ENCODE measurements at regions of chr1 and their contacts with region 1.

Region 1: GRCh38 chr1:153727463-153728304 is at the start of gene INTS3:
- DNase-seq: peak; percentile 99
- H3K4me3 ChIP-seq: peak within 1 kb of the TSS; percentile 62
- H3K27me3 ChIP-seq: no peaks in the 10 kb centered on the region
- CTCF ChIP-seq: peak; percentile 10; the same call in 1 of the 2 replicates
- polyA plus RNA-seq, gene INTS3: 38.8 and 52.8 TPM in 2 replicates

Region 2: DNA sequence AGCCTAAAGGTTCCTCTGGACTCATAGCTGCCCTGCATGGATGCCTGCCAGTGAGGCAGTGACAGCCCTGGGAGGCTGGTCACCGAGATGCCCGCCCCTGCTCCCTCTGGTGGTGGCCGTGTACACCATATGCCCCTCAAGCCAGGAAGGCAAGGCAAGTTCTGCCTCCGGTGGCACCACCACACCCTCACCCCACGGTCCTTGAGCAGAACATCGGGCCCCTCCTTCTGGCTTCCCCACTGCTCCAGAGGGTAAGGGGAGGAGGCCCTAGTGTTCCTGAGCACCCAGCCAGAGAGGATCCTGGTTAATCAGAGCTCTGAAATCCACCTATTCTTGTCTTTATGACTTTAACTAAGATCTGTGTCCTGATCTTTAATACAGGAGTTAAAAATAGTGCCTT is 110.0 kb before region 1 on chr1:
- CTCF ChIA-PET with region 1: no interaction called
- POLR2A ChIA-PET with region 1: no interaction called
- DNase-seq: no peak
- H3K4me3 ChIP-seq: no peak overlapping the region
- H3K27me3 ChIP-seq: no peaks in the 10 kb centered on the region
- CTCF ChIP-seq: peak; percentile 89

Region 3: GRCh38 chr1:153633716-153634665 is 93.7 kb before region 1 on chr1 and contains the start of gene CHTOP:
- CTCF ChIA-PET with region 1: interaction called, 3 read pairs
- POLR2A ChIA-PET with region 1: interaction called, 13 read pairs
- DNase-seq: peak; percentile 88
- H3K4me3 ChIP-seq: peak within 1 kb of the TSS; percentile 80
- H3K27me3 ChIP-seq: no peaks in the 10 kb centered on the region
- CTCF ChIP-seq: no peak; the same call in 1 of the 2 replicates
- polyA plus RNA-seq, gene CHTOP: 36.8 and 38.4 TPM in 2 replicates

Region 4: DNA sequence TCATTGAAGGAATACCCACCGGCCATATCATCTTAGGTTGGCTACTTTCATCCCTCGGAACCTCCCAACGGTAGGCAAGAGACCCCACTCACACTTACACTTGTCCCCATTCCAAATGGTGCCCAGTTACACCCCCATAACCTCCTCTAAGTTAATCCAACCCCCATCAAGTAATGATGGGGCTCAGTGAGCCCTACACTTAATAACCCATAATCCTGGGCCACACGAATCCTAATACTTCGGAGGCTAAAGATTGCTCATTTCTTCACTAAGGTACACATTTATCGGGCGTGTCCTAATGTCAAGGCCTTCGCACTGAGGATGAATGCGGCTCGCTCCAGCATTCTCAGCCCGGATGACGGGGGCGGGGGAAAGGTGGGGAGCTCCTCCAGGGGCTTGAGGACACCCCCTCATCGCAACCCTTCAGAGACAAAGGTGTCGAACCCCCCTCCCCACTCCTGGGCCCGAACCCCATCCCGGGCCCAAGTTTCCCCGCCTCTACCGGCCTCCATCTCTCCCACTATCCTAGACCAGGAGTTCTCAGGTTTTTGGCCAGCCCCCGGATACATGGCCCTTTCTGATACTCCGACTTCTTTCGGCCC is 57.3 kb before region 1 on chr1:
- CTCF ChIA-PET with region 1: no interaction called
- POLR2A ChIA-PET with region 1: no interaction called
- DNase-seq: no peak
- H3K4me3 ChIP-seq: peak overlapping the region; percentile 92
- H3K27me3 ChIP-seq: no peaks in the 10 kb centered on the region
- CTCF ChIP-seq: no peak

Region 5: DNA sequence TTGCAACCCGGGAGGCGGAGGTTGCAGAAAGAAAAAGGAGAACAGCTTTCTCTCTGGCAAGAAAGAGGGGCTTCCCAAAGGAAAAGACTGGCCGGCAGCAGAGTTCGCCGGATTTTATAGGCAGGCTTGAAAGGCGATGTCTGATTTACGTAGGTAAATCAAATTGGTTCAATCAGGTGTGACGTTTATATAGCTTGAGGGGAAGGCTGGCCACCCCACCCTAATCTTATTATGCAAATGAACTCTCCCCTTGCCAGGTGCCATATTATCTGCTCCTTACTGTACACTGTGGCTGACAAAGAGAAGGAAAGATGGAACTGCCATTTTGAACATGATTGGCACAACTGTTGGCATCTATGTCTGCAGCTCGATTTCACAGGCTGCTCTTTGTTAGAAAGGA is 16.7 kb before region 1 on chr1:
- CTCF ChIA-PET with region 1: interaction called, 3 read pairs
- POLR2A ChIA-PET with region 1: interaction called, 12 read pairs
- DNase-seq: no peak
- H3K4me3 ChIP-seq: no peak overlapping the region
- H3K27me3 ChIP-seq: peaks cover 5% of the 10 kb centered on the region
- CTCF ChIP-seq: no peak

Measured in BJ (cell line).